OCI-LY7 (cell line): ENCODE measurements at regions of chr14 and their contacts with region 1.

Region 1: DNA sequence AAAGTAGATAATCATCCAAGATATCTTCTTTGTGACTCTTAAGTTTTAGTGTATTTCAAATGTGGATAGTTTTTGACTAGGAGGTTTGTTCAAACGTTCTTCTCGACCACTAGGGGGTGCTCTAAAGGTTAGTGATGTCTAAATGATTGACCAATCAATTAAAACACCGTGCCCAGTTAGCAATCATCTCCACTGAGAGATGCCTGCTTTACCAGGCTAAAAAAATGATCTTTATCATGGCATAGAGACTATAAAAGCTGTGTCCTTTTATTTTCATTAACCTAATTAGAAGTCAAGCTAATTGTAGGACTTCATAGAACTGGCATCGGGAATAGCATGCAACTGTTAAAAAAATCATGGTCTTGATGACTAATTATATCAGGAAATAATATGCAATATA is 153.9 kb downstream of the PRKCH start:
- DNase-seq: peak; percentile 91
- H3K4me3 ChIP-seq: no peak overlapping the region
- H3K27ac ChIP-seq: peak overlapping the region; percentile 92
- H3K4me1 ChIP-seq: peaks cover 100% of the 10 kb centered on the region
- CTCF ChIP-seq: peak; percentile 99

Region 2: GRCh38 chr14:61493239-61493638 is 17.9 kb after region 1 on chr14:
- CTCF ChIA-PET with region 1: interaction called, 6 read pairs
- POLR2A ChIA-PET with region 1: interaction called, 333 read pairs
- intact Hi-C with region 1: no loop called
- DNase-seq: no peak
- H3K4me3 ChIP-seq: no peak overlapping the region
- H3K27ac ChIP-seq: no peak overlapping the region
- H3K4me1 ChIP-seq: peaks cover 46% of the 10 kb centered on the region
- CTCF ChIP-seq: no peak

Region 3: GRCh38 chr14:61553725-61554641 is 78.7 kb after region 1 on chr14:
- CTCF ChIA-PET with region 1: interaction called, 3 read pairs
- POLR2A ChIA-PET with region 1: interaction called, 43 read pairs
- intact Hi-C with region 1: loop called (anchors 1 kb)
- DNase-seq: no peak
- H3K4me3 ChIP-seq: peak overlapping the region; percentile 6
- H3K27ac ChIP-seq: peak overlapping the region; percentile 83
- H3K4me1 ChIP-seq: peaks cover 54% of the 10 kb centered on the region
- CTCF ChIP-seq: no peak

Region 4: DNA sequence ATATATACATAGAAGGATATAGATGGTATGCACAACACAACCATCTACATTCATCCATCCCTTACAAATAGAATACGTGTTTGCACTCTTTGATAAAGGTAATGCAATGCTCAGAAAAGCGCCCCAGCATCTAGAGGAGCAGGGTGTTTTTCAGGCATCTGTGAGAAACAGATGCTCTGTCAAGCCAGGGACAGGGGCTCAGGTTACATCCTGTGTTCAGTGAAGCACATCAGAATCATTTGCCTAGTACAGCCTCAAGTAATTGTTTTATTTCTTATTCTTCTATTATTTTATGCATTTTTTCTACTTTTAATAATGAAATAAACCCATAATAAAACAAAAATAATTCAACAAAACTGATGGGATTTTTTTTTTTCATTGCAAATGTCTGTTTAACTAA is 169.5 kb after region 1 on chr14:
- CTCF ChIA-PET with region 1: no interaction called
- POLR2A ChIA-PET with region 1: interaction called, 3 read pairs
- intact Hi-C with region 1: loop called (anchors 2 kb)
- DNase-seq: peak; percentile 90
- H3K4me3 ChIP-seq: peak overlapping the region; percentile 51
- H3K27ac ChIP-seq: peak overlapping the region; percentile 95
- H3K4me1 ChIP-seq: peaks cover 61% of the 10 kb centered on the region
- CTCF ChIP-seq: no peak

Region 5: GRCh38 chr14:61719344-61720293 is 244.3 kb after region 1 on chr14:
- CTCF ChIA-PET with region 1: interaction called, 3 read pairs
- POLR2A ChIA-PET with region 1: interaction called, 60 read pairs
- intact Hi-C with region 1: loop called (anchors 5 kb)
- DNase-seq: peak; percentile 63
- H3K4me3 ChIP-seq: peak overlapping the region; percentile 62
- H3K27ac ChIP-seq: peak overlapping the region; percentile 88
- H3K4me1 ChIP-seq: peaks cover 68% of the 10 kb centered on the region
- CTCF ChIP-seq: no peak

Region 6: GRCh38 chr14:61750708-61751474 is 275.6 kb after region 1 on chr14:
- CTCF ChIA-PET with region 1: interaction called, 3 read pairs
- POLR2A ChIA-PET with region 1: interaction called, 16 read pairs
- intact Hi-C with region 1: no loop called
- DNase-seq: peak; percentile 92
- H3K4me3 ChIP-seq: peak overlapping the region; percentile 69
- H3K27ac ChIP-seq: peak overlapping the region; percentile 26
- H3K4me1 ChIP-seq: peaks cover 65% of the 10 kb centered on the region
- CTCF ChIP-seq: no peak

Region 7: DNA sequence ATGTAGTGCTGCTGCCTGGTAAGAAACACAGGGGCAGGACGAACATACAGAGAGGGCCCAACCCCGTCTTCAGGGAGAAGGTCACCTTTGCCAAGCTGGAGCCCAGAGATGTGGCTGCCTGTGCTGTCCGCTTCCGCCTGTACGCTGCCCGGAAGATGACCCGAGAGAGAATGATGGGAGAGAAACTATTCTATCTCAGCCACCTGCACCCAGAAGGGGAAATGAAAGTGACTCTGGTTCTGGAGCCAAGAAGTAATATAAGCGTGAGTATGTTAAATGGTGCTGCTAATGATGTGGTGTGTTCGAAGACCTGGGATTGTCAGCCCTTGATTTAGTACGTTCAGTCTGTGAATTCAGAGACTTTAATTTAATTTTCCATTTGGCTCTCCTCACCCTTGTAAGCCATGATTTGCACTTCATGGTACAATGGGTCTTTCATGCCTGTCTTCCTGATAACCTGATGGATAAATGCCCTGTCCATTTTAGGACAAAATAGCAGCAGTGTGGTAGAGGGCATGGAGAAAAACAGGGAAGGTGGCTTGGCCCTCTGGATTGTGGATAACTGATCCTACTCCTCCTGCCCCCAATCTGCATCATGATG is 605.8 kb after region 1 on chr14:
- CTCF ChIA-PET with region 1: no interaction called
- POLR2A ChIA-PET with region 1: interaction called, 4 read pairs
- intact Hi-C with region 1: loop called (anchors 5 kb)
- DNase-seq: peak; percentile 90
- H3K4me3 ChIP-seq: peak overlapping the region; percentile 53
- H3K27ac ChIP-seq: peak overlapping the region; percentile 88
- H3K4me1 ChIP-seq: peaks cover 69% of the 10 kb centered on the region
- CTCF ChIP-seq: no peak